ENCODE measurements at regions of chr10 and their contacts with region 1.

Region 1: DNA sequence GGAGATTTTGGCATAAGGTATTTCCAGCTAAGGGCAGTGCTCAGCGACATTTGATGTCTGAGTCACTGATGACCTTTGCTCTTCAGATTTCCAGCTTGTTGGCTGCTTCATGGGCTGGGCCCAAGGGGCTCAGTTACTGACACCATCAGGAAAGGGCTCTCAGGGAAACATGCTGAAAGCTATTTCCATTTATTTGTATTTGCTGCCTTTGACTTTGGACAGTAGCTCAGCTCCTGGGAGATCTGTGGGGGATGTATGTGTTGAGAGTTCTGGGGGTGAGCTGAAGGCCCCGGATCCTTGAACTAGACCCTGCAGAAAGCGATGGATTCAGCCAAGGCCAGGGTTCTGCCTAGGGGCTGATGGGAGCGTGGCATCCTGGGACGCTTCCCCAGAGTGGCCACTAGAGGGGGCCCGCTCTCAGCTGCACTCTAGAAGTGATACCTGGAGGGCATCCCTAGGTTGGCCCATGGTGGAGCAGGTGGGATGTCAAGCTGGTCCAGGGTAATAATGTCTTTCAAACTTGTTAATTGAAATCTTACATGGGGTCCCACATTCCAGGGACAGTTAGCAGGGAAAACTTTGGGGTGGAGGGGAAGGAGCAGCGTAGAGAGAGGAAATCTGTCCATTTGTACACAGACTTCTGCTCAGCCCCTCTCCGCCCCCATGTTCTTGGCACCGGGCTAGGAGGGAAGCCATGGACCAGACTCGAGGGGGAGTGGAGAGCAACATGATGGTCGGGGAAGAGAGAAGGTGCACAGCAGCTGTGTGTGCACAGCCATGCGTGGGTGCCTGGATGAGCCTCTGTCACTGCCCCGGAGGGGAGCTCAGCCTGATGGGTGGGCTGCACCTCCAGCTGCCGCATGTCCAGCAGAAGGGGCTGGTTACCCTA is 3.0 kb upstream of the BTBD16 start:
- DNase-seq: no peak
- ATAC-seq: peak; percentile 97
- H3K4me3 ChIP-seq: no peak overlapping the region
- H3K27ac ChIP-seq: no peak overlapping the region
- H3K4me1 ChIP-seq: no peaks in the 10 kb centered on the region
- H3K27me3 ChIP-seq: no peaks in the 10 kb centered on the region
- CTCF ChIP-seq: peak; percentile 81 to 97 (median 95)
- EP300 ChIP-seq: no peak
- POLR2A ChIP-seq: no peak
- RAD21 ChIP-seq: peak; percentile 48

Region 2: GRCh38 chr10:122248356-122249302 is 19.5 kb before region 1 on chr10:
- CTCF ChIA-PET with region 1: no interaction called
- POLR2A ChIA-PET with region 1: no interaction called
- RAD21 ChIA-PET with region 1: no interaction called
- SMC1A ChIA-PET with region 1: no interaction called
- in situ Hi-C with region 1: no loop called
- intact Hi-C with region 1: no loop called
- DNase-seq: no peak
- ATAC-seq: no peak
- H3K4me3 ChIP-seq: no peak overlapping the region
- H3K27ac ChIP-seq: no peak overlapping the region
- H3K4me1 ChIP-seq: no peaks in the 10 kb centered on the region
- H3K27me3 ChIP-seq: 0 out of 4 replicates have a peak, but pooled peaks cover 0 to 1% of the 10 kb centered on the region in 2 experiments
- CTCF ChIP-seq: no peak
- EP300 ChIP-seq: no peak
- POLR2A ChIP-seq: no peak
- RAD21 ChIP-seq: no peak

Region 3: GRCh38 chr10:122279725-122280141 is 11.6 kb after region 1 on chr10:
- CTCF ChIA-PET with region 1: interaction called, 12 read pairs
- POLR2A ChIA-PET with region 1: no interaction called
- RAD21 ChIA-PET with region 1: no interaction called
- SMC1A ChIA-PET with region 1: no interaction called
- in situ Hi-C with region 1: no loop called
- intact Hi-C with region 1: no loop called
- DNase-seq: no peak
- ATAC-seq: peak; percentile 56
- H3K4me3 ChIP-seq: no peak overlapping the region
- H3K27ac ChIP-seq: no peak overlapping the region
- H3K4me1 ChIP-seq: no peaks in the 10 kb centered on the region
- H3K27me3 ChIP-seq: 0 out of 4 replicates have a peak, but pooled peaks cover 0 to 1% of the 10 kb centered on the region in 2 experiments
- CTCF ChIP-seq: peak; percentile 52 to 57 (median 55); a peak in 5 of 6 replicates
- EP300 ChIP-seq: no peak
- POLR2A ChIP-seq: no peak
- RAD21 ChIP-seq: peak; percentile 76

Measured in GM12878 (cell line).